PC-9 (cell line): ENCODE measurements at regions of chr16 and their contacts with region 1.

Region 1: GRCh38 chr16:81314603-81315270 is at the start of gene GAN:
- DNase-seq: peak; percentile 88 to 93
- H3K4me3 ChIP-seq: peak within 1 kb of the TSS; percentile 67
- H3K27ac ChIP-seq: no peak within 1 kb of the TSS
- H3K4me1 ChIP-seq: peaks cover 44% of the 10 kb centered on the region
- H3K27me3 ChIP-seq: no peaks in the 10 kb centered on the region
- CTCF ChIP-seq: no peak
- total RNA-seq, gene GAN: 11.9 TPM in 2 replicates

Region 2: DNA sequence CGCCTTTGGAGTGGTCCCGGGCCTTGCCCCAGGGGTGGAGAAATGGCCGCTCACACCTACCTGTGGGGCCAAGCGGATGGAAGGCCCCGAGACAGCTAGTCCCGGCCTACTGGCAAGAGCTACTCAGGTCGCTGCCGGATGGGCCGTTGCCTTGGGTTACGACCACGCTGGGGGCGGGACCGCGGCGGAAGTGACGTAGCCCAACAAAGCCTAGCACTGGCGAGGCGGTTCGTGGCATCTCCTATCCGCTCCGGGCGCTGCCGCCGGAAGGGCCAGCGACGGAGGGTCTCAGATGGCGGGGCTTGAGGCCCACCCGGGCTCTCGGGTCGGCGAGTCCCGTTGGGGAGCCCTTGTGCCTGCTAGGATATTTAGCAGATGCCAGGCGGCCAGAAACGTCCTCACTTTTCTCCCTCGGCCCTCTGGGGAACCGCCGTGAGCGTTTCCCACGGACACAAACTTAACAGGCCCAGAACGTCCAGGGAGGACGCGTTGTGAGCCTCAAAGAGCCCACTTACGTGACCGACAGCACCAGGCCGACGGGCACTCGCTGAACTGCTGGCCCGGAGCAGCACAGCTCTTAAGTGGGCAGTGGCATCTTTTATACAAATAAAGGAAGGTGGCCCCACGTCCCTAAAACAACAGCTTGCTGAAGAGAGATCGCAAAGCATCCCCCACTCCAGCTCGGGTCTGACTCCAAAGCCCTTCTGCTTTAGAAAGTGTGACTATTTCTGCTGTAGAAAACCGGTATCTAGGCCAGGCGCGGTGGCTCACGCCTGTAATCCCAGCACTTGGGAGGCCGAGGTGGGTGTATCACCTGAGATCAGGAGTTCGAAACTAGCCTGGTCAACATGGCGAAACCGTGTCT is 237.4 kb before region 1 on chr16 and contains the start of gene C16orf46:
- CTCF ChIA-PET with region 1: interaction called, 9 read pairs
- POLR2A ChIA-PET with region 1: interaction called, 3 read pairs
- intact Hi-C with region 1: loop called (anchors 10 kb)
- DNase-seq: peak; percentile 91 to 97
- H3K4me3 ChIP-seq: peak within 1 kb of the TSS; percentile 76
- H3K27ac ChIP-seq: peak within 1 kb of the TSS; percentile 79
- H3K4me1 ChIP-seq: peaks cover 17% of the 10 kb centered on the region; the same call in 1 of the 2 replicates
- H3K27me3 ChIP-seq: no peaks in the 10 kb centered on the region
- CTCF ChIP-seq: no peak
- total RNA-seq, gene C16orf46: 0.92 and 2.3 TPM in 2 replicates

Region 3: DNA sequence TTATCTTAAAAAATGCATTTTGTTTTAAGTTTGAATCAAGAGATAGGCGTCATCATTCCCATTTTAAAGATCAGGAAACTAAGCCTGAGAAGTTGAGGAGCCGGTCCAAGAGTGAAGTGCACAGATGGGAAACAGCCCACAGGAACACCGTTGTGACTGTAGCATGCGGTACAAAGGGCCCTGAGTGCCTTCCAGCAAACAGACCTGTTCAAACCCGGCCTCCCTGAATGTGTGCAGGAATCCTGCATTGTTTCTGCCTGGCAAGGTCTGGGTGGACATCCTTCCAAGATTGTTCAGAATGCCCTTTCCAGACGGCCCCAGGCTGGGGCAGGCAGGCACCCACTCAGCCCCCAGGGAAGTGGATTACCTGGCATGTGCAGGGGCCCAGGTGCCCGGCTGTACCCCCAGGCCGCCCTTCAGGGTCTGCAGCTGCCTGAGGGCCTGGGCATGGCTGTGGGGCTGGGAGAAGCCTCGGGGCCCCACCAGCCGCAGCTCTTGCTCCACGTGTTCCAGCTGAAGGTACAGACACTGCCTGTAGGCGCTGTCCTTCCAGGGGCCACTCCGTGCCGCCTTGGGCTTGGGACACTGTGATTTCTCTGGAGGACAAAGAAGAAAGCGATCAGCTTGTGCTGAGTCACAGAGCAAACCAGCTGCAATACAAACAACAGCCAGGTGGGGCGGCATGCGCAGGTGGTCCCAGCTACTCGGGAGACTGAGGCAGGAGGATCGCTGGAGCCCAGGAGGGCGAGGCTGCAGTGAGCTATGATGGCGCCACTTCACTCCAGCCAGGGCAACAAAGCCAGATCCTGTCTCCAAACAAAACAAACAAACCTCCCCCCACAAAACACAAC is 173.6 kb before region 1 on chr16:
- CTCF ChIA-PET with region 1: no interaction called
- POLR2A ChIA-PET with region 1: no interaction called
- intact Hi-C with region 1: no loop called
- DNase-seq: peak in 1 of 2 experiments; percentile 19
- H3K4me3 ChIP-seq: no peak overlapping the region
- H3K27ac ChIP-seq: peak overlapping the region; percentile 98
- H3K4me1 ChIP-seq: peaks cover 58% of the 10 kb centered on the region
- H3K27me3 ChIP-seq: no peaks in the 10 kb centered on the region
- CTCF ChIP-seq: peak; percentile 58

Region 4: DNA sequence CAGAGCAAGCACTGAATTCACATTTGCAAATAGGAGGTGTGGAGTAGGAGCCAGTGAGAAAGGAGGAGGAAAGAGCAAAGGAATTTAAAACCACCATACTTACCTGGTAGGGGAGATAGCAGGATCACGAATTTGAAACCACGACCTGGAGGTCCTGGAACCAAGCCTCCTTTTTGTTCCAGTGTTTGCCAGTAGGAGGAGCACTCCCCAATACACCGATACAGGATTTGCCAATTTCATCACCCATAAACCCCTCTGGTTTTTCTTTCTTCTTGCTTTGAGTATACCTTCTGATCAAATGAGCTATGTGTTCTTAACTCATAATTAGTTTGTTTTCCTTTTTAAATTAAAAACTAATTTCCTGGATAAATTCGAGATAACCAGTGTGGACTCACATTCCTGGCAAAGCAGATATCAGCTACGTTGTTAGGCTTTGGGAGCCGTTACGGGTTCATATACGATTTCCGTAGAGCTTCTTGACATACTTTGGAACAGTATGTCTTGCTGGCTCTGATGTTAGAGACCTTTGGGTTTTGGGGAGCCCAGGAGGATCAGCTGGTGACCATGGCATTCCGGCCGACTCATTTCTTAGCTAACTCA is 53.6 kb before region 1 on chr16:
- CTCF ChIA-PET with region 1: no interaction called
- POLR2A ChIA-PET with region 1: no interaction called
- intact Hi-C with region 1: loop called (anchors 2 kb)
- DNase-seq: no peak
- H3K4me3 ChIP-seq: no peak overlapping the region
- H3K27ac ChIP-seq: no peak overlapping the region
- H3K4me1 ChIP-seq: peaks cover 6% of the 10 kb centered on the region
- H3K27me3 ChIP-seq: no peaks in the 10 kb centered on the region
- CTCF ChIP-seq: peak; percentile 77

Region 5: GRCh38 chr16:81277533-81278080 is 37.1 kb before region 1 on chr16:
- CTCF ChIA-PET with region 1: no interaction called
- POLR2A ChIA-PET with region 1: no interaction called
- intact Hi-C with region 1: loop called (anchors 1 kb)
- DNase-seq: peak; percentile 72 to 94
- H3K4me3 ChIP-seq: no peak overlapping the region
- H3K27ac ChIP-seq: peak overlapping the region; percentile 87
- H3K4me1 ChIP-seq: peaks cover 36% of the 10 kb centered on the region
- H3K27me3 ChIP-seq: no peaks in the 10 kb centered on the region
- CTCF ChIP-seq: no peak

Region 6: GRCh38 chr16:81349996-81350618 is 35.4 kb after region 1 on chr16:
- CTCF ChIA-PET with region 1: interaction called, 10 read pairs
- POLR2A ChIA-PET with region 1: no interaction called
- intact Hi-C with region 1: no loop called
- DNase-seq: no peak
- H3K4me3 ChIP-seq: no peak overlapping the region
- H3K27ac ChIP-seq: no peak overlapping the region
- H3K4me1 ChIP-seq: no peaks in the 10 kb centered on the region
- H3K27me3 ChIP-seq: no peaks in the 10 kb centered on the region
- CTCF ChIP-seq: peak; percentile 42; the same call in 1 of the 2 replicates